ENCODE measurements at regions of chr3 and their contacts with region 1.

Region 1: DNA sequence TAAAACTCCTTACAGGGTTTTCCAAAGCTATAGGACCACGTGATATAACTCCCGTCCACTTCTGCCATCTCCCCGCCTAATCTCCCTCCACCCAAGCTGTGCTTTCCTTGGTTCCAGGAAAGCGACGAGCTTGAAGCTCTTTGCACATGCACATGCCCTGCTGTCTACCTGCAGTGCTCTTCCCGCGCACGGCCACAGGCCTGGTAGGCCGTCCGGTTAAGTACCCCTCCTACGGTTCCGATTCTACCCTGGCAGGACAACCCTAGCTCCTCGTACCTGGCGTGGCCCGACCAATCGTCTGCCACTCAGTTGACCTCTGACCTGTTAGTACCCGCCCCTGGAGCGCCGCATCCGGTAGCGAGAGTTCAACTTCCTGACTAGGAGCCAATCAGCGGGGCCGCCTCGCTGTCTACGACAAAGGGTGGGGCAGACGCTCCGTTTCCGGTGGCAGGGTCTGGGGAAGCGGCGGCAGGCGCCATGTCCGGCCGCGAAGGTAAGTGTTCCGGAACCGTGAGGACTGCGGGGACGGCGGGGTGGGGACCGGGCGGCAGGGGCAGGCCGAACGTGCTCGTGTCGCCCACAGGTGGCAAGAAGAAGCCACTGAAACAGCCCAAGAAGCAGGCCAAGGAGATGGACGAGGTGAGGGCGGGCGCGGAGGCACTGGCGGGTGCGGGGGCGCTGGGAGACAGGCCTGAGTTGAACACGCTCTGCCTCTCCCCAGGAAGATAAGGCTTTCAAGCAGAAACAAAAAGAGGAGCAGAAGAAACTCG is at the starts of genes CCDC51 and TMA7:
- DNase-seq: peak; percentile 96
- ATAC-seq: peak; percentile 91
- H3K4me3 ChIP-seq: peak within 1 kb of the TSS; percentile 98 to 100
- H3K27ac ChIP-seq: peak within 1 kb of the TSS; percentile 71
- H3K4me1 ChIP-seq: peaks cover 14 to 36% of the 10 kb centered on the region in 2 experiments
- H3K27me3 ChIP-seq: no peaks in the 10 kb centered on the region
- CTCF ChIP-seq: no peak
- POLR2A ChIP-seq: peak; percentile 68
- RAD21 ChIP-seq: no peak
- total RNA-seq, gene CCDC51: 29.3 TPM
- total RNA-seq, gene TMA7: 334 TPM

Region 2: DNA sequence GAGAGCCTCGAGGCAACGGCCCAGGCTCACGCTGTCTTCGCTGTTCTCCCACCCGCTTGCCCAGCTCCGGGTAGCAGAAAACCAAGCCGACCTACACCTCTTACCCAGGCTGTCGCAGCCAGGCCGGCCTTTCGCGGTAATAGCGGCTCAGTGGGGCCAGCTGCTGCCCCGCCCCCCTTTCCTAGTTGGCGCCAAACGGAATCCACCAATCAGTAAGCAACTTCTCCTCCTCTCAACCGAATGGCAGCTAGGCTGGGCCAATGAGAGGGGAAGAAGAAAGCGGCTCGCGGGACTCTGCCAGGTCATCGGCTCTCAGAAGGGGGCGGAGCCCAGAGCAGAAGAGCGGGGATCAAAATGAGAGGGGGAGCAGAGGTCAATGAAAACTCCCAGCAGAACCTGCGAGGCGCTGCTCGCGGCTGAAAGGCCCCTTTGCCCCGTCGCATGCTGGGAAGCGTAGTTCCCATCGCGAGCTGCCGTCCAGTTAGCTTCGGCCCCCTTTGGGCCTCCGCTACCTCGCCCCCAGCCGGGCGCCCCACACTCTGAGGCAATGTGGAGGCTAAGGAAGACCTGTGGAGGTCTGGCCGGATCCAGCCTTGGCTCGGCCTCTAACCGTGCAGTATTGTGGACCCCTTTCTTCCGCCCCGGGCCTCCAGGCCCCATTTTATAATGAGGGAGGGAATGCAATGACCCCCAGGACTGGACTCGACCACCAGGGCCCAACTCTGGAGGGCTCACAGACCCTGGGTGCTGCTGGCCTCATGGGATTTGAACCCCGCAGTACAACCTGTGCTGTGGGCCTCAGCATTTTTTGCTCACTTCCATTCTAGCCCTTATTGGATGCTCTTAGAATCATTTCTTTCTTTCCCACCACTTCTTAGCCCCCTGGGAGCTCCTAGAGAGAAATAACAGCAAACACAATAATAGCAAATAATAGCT is 251.5 kb before region 1 on chr3 and contains the start of gene CDC25A:
- CTCF ChIA-PET with region 1: interaction called, 99 read pairs
- POLR2A ChIA-PET with region 1: interaction called, 3 read pairs
- RAD21 ChIA-PET with region 1: no interaction called
- intact Hi-C with region 1: no loop called
- DNase-seq: peak; percentile 98
- ATAC-seq: peak; percentile 97
- H3K4me3 ChIP-seq: peak within 1 kb of the TSS; percentile 84 to 90
- H3K27ac ChIP-seq: peak within 1 kb of the TSS; percentile 67
- H3K4me1 ChIP-seq: peaks cover 11 to 29% of the 10 kb centered on the region in 2 experiments; a peak in 3 of 4 replicates
- H3K27me3 ChIP-seq: no peaks in the 10 kb centered on the region
- CTCF ChIP-seq: no peak
- POLR2A ChIP-seq: peak; percentile 50
- RAD21 ChIP-seq: no peak
- total RNA-seq, gene CDC25A: 19.6 TPM

Region 3: DNA sequence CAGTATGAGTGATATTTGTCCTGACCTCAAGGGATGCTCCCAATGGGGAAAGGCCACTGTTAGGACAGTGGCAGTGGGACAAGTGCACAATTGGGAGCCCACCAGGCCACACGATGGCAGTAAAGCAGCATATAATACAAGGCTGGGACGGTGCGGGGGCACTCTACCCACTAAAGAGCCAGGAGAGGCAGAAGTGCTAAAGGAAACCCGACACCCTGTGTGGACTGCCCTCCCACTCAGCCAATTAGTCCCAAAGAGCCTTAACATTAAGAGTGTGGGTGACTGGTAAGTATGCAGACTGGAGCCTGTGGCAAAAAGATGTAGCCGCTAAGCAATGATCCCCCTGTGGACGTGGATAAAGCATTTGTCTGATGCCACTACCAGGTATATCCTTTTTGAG is 207.3 kb before region 1 on chr3:
- CTCF ChIA-PET with region 1: interaction called, 8 read pairs
- POLR2A ChIA-PET with region 1: no interaction called
- RAD21 ChIA-PET with region 1: interaction called in 1 of 2 experiments, 4 read pairs
- intact Hi-C with region 1: loop called (anchors 1 kb)
- DNase-seq: peak; percentile 74
- ATAC-seq: peak; percentile 100
- H3K4me3 ChIP-seq: peak overlapping the region; percentile 6 to 42
- H3K27ac ChIP-seq: no peak overlapping the region
- H3K4me1 ChIP-seq: peaks cover 0 to 8% of the 10 kb centered on the region in 2 experiments; a peak in 2 of 4 replicates
- H3K27me3 ChIP-seq: no peaks in the 10 kb centered on the region
- CTCF ChIP-seq: peak; percentile 78 to 86 (median 82)
- POLR2A ChIP-seq: peak; percentile 50
- RAD21 ChIP-seq: peak; percentile 76

Region 4: GRCh38 chr3:48273594-48274211 is 166.3 kb before region 1 on chr3:
- CTCF ChIA-PET with region 1: interaction called, 91 read pairs
- POLR2A ChIA-PET with region 1: interaction called, 4 read pairs
- RAD21 ChIA-PET with region 1: interaction called, 5 to 8 read pairs
- intact Hi-C with region 1: loop called (anchors 1 kb)
- DNase-seq: peak; percentile 56
- ATAC-seq: peak; percentile 82
- H3K4me3 ChIP-seq: no peak overlapping the region
- H3K27ac ChIP-seq: no peak overlapping the region
- H3K4me1 ChIP-seq: no peaks in the 10 kb centered on the region
- H3K27me3 ChIP-seq: no peaks in the 10 kb centered on the region
- CTCF ChIP-seq: peak; percentile 82 to 91 (median 84)
- POLR2A ChIP-seq: no peak
- RAD21 ChIP-seq: peak; percentile 89

Region 5: GRCh38 chr3:48400824-48401433 is 39.1 kb before region 1 on chr3:
- CTCF ChIA-PET with region 1: interaction called, 386 read pairs
- POLR2A ChIA-PET with region 1: interaction called, 22 read pairs
- RAD21 ChIA-PET with region 1: interaction called, 54 to 59 read pairs
- intact Hi-C with region 1: loop called (anchors 1 kb)
- DNase-seq: peak; percentile 69
- ATAC-seq: peak; percentile 80
- H3K4me3 ChIP-seq: no peak overlapping the region
- H3K27ac ChIP-seq: no peak overlapping the region
- H3K4me1 ChIP-seq: peaks cover 14 to 39% of the 10 kb centered on the region in 2 experiments
- H3K27me3 ChIP-seq: no peaks in the 10 kb centered on the region
- CTCF ChIP-seq: peak; percentile 69 to 97 (median 83)
- POLR2A ChIP-seq: no peak
- RAD21 ChIP-seq: peak; percentile 97

Region 6: GRCh38 chr3:48429317-48429959 is 10.6 kb before region 1 on chr3:
- CTCF ChIA-PET with region 1: interaction called, 18 read pairs
- POLR2A ChIA-PET with region 1: interaction called, 5 read pairs
- RAD21 ChIA-PET with region 1: interaction called in 1 of 2 experiments, 3 read pairs
- intact Hi-C with region 1: no loop called
- DNase-seq: no peak
- ATAC-seq: peak; percentile 58
- H3K4me3 ChIP-seq: peak overlapping the region; percentile 58 to 70
- H3K27ac ChIP-seq: peak overlapping the region; percentile 81
- H3K4me1 ChIP-seq: peaks cover 44 to 59% of the 10 kb centered on the region in 2 experiments
- H3K27me3 ChIP-seq: no peaks in the 10 kb centered on the region
- CTCF ChIP-seq: no peak
- POLR2A ChIP-seq: no peak
- RAD21 ChIP-seq: no peak

Region 7: DNA sequence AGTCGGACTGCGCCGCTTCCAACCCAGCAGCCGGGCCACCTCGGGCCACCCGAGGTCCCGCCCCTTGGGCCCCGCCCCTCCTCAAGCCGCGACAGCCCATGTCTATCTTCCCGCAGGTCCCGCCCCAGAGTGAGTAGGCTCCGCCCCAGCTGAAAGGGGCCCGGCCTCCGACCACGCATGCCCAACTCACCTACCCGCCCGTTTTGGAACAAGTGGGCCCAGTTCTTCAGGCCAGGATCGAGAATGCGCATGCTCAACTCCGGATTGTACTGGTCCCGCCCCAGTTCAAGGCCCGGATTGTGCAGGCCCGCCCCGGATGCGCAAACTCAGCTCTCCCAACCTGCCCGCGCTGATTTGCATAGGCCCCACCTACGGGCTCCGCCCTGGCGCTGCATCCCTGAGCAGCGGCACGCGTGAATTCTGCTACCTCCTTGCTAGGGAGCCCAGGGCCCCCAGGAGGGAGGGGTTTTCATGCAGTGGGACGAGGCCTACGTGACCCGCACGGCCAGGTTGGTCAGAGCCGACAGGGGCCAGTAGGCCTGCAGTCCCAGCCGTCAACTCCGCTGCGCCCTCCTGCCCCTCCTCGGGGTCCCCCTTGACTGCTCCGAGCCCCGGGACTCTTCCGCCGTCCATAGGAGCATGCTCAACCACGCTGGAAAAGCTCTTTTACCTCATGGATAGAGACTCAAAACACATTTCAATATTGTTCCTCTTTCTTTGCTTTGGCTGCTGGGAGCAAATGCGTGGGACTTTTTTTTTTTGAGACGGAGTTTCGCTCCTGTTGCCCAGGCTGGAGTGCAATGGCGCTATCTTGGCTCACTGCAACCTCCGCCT is 117.0 kb after region 1 on chr3 and contains the start of gene PFKFB4:
- CTCF ChIA-PET with region 1: interaction called, 29 read pairs
- POLR2A ChIA-PET with region 1: interaction called, 3 read pairs
- RAD21 ChIA-PET with region 1: interaction called, 4 read pairs
- intact Hi-C with region 1: no loop called
- DNase-seq: peak; percentile 99
- ATAC-seq: peak; percentile 86
- H3K4me3 ChIP-seq: peak within 1 kb of the TSS; percentile 68 to 82
- H3K27ac ChIP-seq: peak within 1 kb of the TSS; percentile 94
- H3K4me1 ChIP-seq: peaks cover 28 to 68% of the 10 kb centered on the region in 2 experiments
- H3K27me3 ChIP-seq: no peaks in the 10 kb centered on the region
- CTCF ChIP-seq: no peak
- POLR2A ChIP-seq: peak; percentile 60
- RAD21 ChIP-seq: no peak
- total RNA-seq, gene PFKFB4: 20.3 TPM

Measured in HCT116 (cell line).